ENCODE measurements at regions of chr17 and their contacts with region 1.

Region 1: DNA sequence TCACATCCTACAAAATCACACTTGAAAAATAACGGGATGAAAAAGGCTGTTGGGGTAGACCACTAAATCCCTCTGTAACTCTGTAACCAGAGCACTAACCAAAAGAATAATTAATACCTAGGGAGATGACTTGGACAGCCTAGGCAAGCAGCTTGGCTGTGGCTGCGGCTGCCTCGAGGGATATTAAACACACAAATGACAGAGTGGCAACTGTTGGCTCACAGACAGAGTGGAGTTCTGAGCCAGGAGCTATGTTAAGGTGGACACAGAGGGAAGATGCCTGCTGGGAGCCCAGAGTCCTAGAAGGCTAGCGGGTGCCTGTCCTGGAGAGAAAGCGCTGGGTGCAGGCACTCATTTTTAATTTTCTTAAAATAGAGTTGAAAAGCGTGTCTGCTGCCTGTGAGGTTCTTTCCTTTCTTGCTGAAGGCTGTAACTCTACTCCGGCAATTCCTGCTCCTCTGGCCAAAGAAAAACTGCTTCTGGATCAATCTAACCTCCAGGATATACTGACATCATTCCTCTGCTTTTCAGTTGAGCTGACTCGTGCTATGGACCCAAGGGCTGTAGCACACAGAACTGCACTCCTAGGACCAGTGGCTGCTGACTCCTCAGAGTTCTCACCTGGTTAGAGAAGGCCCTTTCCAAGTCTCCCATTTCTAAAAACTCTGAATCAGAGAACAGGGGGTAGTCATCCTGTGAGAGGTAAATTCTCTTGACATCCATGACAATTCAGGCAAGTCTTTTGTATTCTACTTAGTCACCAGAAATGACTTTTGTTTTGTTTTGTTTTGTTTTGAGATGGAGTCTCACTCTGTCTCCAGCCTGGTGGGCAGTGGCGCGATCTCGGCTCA is 147.9 kb downstream of the STX8 start:
- ATAC-seq: peak in 6 of 8 experiments; percentile 30 to 52 (median 46)
- H3K4me3 ChIP-seq: no peak overlapping the region
- H3K27ac ChIP-seq: peak overlapping the region in 1 of 2 donors; percentile 27
- H3K4me1 ChIP-seq: peaks cover 0 to 13% of the 10 kb centered on the region in 2 donors

Region 2: GRCh38 chr17:8941520-8941919 is 486.2 kb before region 1 on chr17:
- in situ Hi-C with region 1: no loop called
- ATAC-seq: no peak
- H3K4me3 ChIP-seq: no peak overlapping the region
- H3K27ac ChIP-seq: no peak overlapping the region
- H3K4me1 ChIP-seq: no peaks in the 10 kb centered on the region

Region 3: DNA sequence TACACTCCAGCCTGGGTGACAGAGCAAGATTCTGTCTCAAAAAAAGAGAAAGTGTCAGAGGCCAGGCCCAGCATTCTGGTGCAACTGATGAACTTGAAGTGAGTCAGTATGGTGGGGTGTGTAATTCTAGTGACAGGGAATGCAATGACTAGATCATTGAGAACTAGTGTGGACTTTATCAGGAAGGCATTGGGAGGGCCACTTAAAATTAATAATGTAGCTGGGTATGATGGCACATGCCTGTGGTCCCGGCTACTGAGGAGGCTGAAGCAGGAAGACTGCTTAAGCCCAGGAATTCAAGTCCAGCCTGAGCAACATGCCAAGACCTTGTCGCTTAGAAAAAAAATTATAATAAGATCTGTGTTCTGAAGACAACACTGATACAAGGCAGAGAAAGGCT is 57.1 kb after region 1 on chr17:
- in situ Hi-C with region 1: loop called in 1 of 9 experiments (anchors 10 kb)
- ATAC-seq: peak in 1 of 8 experiments; percentile 25
- H3K4me3 ChIP-seq: no peak overlapping the region
- H3K27ac ChIP-seq: no peak overlapping the region
- H3K4me1 ChIP-seq: peaks cover 0 to 1% of the 10 kb centered on the region in 2 donors

Measured in motor neuron (in vitro differentiated cells).